ENCODE measurements at regions of chr15 and their contacts with region 1.

Region 1: GRCh38 chr15:63402498-63403253 is 21.0 kb upstream of the CA12 start:
- DNase-seq: no peak
- H3K4me3 ChIP-seq: no peak overlapping the region
- CTCF ChIP-seq: no peak
- POLR2A ChIP-seq: no peak

Region 2: GRCh38 chr15:63291507-63291906 is 111.2 kb before region 1 on chr15:
- intact Hi-C with region 1: loop called (anchors 5 kb)
- DNase-seq: no peak
- H3K4me3 ChIP-seq: no peak overlapping the region
- CTCF ChIP-seq: no peak
- POLR2A ChIP-seq: no peak

Region 3: DNA sequence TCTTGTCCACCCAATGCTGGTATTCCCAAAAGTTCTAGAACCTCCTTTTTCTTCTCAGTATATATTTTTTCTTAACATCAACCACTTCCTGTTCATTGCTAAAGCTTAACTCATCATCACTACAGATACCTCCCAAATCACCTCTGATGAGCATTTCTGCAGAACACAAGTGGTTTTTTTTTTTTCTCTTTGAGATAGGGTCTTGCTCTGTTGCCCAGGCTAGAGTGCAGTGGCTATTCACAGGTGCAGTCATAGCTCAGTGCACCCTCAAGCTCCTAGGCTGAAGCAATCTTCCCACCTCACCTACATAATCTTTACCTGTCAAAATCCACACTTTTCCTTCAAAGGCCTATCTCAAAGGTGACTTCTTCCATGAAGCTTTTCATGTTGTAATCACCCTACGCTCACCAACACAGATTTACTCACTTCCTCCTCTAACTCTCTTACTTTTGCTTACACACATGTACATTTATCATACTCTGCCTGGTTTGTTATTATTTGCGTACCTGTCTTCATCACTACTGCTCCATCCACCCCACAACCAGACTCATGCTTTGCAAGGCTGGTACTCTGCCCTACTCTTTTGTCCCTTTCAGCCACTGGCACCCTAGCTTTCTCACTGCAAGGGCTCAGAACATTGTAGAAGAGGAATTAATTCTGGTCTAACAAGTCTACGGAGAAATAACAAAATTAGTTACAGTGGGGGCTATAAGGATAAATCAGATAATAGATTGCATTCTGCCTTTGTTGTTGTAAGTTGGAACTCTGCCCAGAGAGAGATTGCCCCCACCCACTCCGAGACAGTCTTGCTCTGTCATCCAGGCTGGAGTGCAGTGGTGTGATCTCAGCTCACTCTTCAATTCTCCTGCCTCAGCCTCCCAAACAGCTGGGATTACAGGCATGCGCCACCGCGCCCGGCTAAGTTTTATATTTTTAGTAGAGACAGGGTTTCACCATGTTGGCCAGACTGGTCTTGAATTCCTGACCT is 403.6 kb after region 1 on chr15:
- intact Hi-C with region 1: no loop called
- DNase-seq: no peak
- H3K4me3 ChIP-seq: no peak overlapping the region
- CTCF ChIP-seq: no peak
- POLR2A ChIP-seq: no peak